Common myeloid progenitor, CD34-positive (primary cell): ENCODE measurements at regions of chr1 and their contacts with region 1.

Region 1: GRCh38 chr1:180515864-180516388 is 13.5 kb upstream of the ACBD6 start:
- DNase-seq: peak; percentile 60 to 80 (median 73)
- H3K4me3 ChIP-seq: no peak overlapping the region
- H3K27ac ChIP-seq: no peak overlapping the region
- H3K4me1 ChIP-seq: peaks cover 0 to 4% (median 2%) of the 10 kb centered on the region in 4 experiments
- H3K27me3 ChIP-seq: no peaks in the 10 kb centered on the region

Region 2: DNA sequence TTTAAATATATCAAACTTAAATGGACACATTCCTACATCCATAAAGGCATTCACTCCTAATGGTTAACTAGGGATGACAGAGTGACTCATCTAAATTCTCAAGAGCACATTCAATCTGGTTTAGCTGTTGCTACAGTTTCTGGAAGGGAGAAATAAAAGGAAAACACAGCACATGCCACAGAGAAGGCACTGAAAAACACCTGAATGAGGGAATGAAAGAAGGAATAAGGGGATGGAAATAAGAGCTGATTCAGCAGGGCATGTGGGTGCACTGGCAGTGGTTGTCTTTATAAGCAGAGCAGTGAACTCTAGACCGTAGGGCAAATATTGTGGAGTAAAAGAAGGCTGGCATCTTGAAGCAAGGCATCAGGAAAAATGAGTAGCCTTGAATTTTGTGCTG is 206.6 kb before region 1 on chr1:
- CTCF ChIA-PET with region 1: no interaction called
- POLR2A ChIA-PET with region 1: no interaction called
- DNase-seq: no peak
- H3K4me3 ChIP-seq: no peak overlapping the region
- H3K27ac ChIP-seq: no peak overlapping the region
- H3K4me1 ChIP-seq: no peaks in the 10 kb centered on the region
- H3K27me3 ChIP-seq: no peaks in the 10 kb centered on the region

Region 3: DNA sequence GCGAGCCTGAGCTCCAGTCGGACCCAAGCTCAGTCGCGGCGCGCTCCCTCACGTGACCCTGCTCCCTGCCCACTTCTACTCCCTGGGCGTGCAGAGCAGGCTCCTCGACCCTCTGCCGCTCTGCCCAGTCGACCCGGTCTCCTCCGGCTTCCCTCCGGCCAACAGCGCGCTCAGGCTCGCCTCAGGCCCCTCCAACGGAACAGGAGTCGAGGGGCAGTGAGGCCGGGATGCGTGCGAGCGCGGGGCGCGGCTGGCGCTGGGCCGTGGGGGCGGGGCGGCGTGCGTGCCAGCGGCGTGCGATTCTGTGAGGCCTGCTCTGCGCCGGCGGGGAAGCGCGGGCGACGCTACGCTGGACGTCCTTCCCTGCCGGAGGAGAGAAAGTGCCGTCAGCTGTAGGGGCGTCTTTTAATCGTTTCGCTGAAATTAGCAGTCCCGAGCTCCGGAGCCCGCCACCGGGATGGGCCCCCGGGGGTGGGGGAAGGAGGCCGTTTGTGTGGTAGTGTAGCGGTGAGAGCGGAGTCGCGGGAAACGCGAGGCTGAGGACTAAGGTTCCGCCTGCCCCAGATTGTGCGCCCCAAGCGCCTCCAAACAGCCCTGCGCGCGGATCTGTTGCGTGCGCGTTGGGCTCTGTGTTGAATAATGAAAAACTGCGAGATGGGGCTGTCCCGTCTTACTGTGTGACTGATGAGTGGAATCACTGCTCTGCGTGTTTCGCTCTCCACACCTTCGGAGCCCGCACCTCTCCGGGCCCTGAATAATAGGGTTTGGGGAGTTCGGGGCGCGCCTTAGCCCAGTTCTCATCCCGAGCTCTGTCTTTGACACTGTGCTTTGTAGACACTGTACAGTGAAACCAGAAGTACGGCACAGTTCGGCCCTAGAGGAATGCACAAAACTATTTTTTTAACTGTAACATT is 13.3 kb before region 1 on chr1 and contains the start of gene ACBD6:
- CTCF ChIA-PET with region 1: interaction called, 11 read pairs
- POLR2A ChIA-PET with region 1: no interaction called
- DNase-seq: peak; percentile 89 to 95 (median 94)
- H3K4me3 ChIP-seq: peak within 1 kb of the TSS; percentile 81 to 100 (median 95)
- H3K27ac ChIP-seq: peak within 1 kb of the TSS; percentile 97 to 98
- H3K4me1 ChIP-seq: peaks cover 9 to 35% (median 20%) of the 10 kb centered on the region in 4 experiments
- H3K27me3 ChIP-seq: no peaks in the 10 kb centered on the region